Esophagus muscularis mucosa (tissue), 4 donors: ENCODE measurements at regions of chr1 and their contacts with region 1.

Region 1: GRCh38 chr1:35564037-35564883 is 6.7 kb downstream of the NCDN start:
- DNase-seq: no peak
- H3K4me3 ChIP-seq: no peak overlapping the region
- H3K27ac ChIP-seq: no peak overlapping the region
- H3K4me1 ChIP-seq: peaks cover 16 to 31% (median 25%) of the 10 kb centered on the region in 4 donors
- H3K27me3 ChIP-seq: peaks cover 0 to 1% (median 0%) of the 10 kb centered on the region in 4 donors
- CTCF ChIP-seq: peak; percentile 67 to 80 (median 71)
- EP300 ChIP-seq: no peak
- POLR2A ChIP-seq: no peak

Region 2: GRCh38 chr1:35451125-35451528 is 113.1 kb before region 1 on chr1:
- intact Hi-C with region 1: loop called (anchors 2 kb)
- DNase-seq: peak; percentile 94
- H3K4me3 ChIP-seq: no peak overlapping the region
- H3K27ac ChIP-seq: peak overlapping the region in 3 of 4 donors; percentile 35 to 56 (median 38)
- H3K4me1 ChIP-seq: peaks cover 27 to 43% (median 35%) of the 10 kb centered on the region in 4 donors
- H3K27me3 ChIP-seq: no peaks in the 10 kb centered on the region
- CTCF ChIP-seq: peak; percentile 75 to 91 (median 91)
- EP300 ChIP-seq: no peak
- POLR2A ChIP-seq: no peak

Region 3: GRCh38 chr1:35641233-35641866 is 77.1 kb after region 1 on chr1 and contains the start of gene PSMB2:
- intact Hi-C with region 1: loop called (anchors 5 kb)
- DNase-seq: peak; percentile 99
- H3K4me3 ChIP-seq: peak within 1 kb of the TSS; percentile 83 to 92 (median 86)
- H3K27ac ChIP-seq: peak within 1 kb of the TSS; percentile 89 to 95 (median 92)
- H3K4me1 ChIP-seq: peaks cover 29 to 50% (median 47%) of the 10 kb centered on the region in 4 donors
- H3K27me3 ChIP-seq: peaks cover 0 to 18% (median 0%) of the 10 kb centered on the region in 4 donors
- CTCF ChIP-seq: no peak
- EP300 ChIP-seq: no peak
- POLR2A ChIP-seq: peak; percentile 50
- total RNA-seq, gene PSMB2: 30.3 to 40.5 (median 32.4) TPM

Region 4: DNA sequence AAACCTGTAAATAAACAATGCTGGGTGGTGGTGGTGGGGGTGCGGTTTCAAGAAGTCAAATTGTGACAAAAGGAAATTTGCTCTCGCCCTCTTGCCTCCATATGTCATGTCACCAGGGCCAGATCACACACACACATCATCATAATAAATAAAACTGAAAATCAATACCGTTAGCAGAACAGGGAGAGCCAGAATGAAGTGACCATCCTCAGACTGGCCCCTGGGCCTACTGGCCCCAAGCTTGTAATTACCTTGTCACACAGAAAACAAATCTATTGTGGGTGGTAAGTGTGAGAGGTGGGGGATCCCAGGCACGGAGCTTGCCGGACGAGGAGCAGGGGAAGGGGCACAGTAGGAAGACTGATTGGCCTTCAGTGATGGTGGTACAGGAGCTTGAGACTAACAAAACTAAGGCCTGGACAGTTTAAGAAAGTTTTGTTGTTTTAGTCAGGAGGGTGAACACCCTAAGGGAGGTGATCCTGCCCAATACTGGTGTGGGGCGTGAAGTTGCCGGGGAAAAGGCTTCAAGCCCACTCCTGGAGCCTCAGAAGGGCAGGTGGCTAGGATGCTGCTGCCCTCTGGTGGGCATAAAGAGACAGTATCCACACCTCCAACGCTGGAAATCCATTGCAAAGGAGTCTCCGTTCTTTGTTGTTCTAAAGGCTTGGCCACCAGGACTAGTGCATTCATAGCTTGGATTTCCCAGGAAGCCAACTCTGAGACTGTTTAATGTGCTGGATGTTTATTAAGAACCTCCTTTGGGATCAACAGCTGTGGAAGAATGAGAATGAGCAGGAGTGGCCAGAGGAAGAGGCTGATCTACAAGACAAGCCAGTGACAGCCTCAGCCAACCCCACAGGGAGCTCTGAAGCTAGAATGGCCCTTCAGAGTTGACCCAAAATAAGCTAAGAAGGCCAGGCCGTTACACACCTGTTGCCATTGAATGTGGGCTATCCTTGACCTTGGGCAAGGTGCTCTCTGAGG is 162.5 kb after region 1 on chr1:
- intact Hi-C with region 1: loop called (anchors 2 kb)
- DNase-seq: no peak
- H3K4me3 ChIP-seq: no peak overlapping the region
- H3K27ac ChIP-seq: no peak overlapping the region
- H3K4me1 ChIP-seq: peaks cover 0 to 9% (median 8%) of the 10 kb centered on the region in 4 donors
- H3K27me3 ChIP-seq: no peaks in the 10 kb centered on the region
- CTCF ChIP-seq: peak; percentile 77 to 88 (median 79)
- EP300 ChIP-seq: no peak
- POLR2A ChIP-seq: no peak

Region 5: DNA sequence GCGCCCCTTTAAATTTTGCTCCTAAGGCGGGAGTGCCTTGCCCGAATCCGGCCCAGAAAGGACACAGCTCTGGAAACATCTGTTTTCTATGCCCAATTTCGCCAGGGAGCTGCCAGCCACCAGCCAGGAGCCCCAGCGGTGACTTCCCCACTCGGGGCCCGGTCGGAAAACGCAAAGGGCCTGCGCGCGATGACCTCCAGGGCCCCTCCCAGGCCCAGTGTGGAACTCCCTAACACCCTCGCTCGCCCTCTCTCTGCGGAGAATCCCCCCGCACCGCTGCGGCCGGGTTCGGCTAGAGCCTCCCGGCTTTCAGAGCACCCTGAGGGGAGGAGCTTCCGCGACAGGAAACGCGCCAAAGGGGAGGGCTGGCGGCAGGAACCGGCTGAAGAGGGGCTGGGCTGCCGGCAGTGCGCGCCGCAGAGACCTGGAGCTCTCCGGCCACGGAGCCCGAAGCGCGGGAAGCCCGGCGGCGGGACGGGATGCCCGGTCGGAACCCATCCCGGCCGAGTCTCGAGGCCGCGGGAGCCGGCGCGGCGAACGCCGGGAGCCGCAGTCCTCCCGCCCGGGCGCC is 205.0 kb after region 1 on chr1:
- intact Hi-C with region 1: loop called (anchors 2 kb)
- DNase-seq: peak; percentile 93
- H3K4me3 ChIP-seq: peak overlapping the region; percentile 64 to 89 (median 76)
- H3K27ac ChIP-seq: peak overlapping the region; percentile 75 to 81 (median 80)
- H3K4me1 ChIP-seq: peaks cover 0 to 20% (median 13%) of the 10 kb centered on the region in 4 donors
- H3K27me3 ChIP-seq: no peaks in the 10 kb centered on the region
- CTCF ChIP-seq: peak in 1 of 3 experiments; percentile 4
- EP300 ChIP-seq: no peak
- POLR2A ChIP-seq: no peak